ENCODE measurements at regions of chr4 and their contacts with region 1.

Region 1: DNA sequence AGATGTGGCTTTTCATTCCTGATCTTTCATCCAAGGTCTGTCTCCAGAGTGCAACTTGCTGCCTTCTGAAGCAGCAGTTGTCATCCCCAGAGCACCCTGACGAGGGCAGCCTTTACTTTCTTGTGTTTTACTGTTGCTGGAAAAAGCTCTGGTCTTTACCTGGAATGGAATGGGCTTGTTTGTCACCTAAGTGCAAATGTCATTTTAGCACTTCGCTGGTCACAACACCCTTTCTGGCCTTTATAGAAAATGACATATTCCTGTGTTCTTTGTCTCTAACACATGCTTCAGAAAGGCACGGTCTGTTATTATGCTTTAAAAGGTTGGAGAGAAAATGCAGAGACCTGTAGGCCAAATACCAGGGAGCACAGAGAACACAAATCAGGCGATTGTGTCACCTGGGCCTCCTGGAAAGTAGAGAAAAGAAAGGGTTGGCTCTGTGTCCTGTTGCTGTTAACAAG is 332.7 kb upstream of the IGFBP7 start:
- DNase-seq: peak; percentile 56
- ATAC-seq: peak; percentile 72

Region 2: GRCh38 chr4:57734104-57734670 is 291.3 kb after region 1 on chr4:
- intact Hi-C with region 1: loop called (anchors 5 kb)
- DNase-seq: no peak
- ATAC-seq: peak; percentile 96

Region 3: GRCh38 chr4:58061970-58062369 is 619.1 kb after region 1 on chr4:
- intact Hi-C with region 1: loop called (anchors 10 kb)
- DNase-seq: no peak
- ATAC-seq: no peak

Measured in Right ventricle myocardium superior (tissue), 1 donor.